GM18951 (cell line): ENCODE measurements at regions of chr11 and their contacts with region 1.

Region 1: GRCh38 chr11:2420502-2421225 is 20.1 kb downstream of the TSSC4 start:
- POLR2A ChIP-seq: no peak

Region 2: DNA sequence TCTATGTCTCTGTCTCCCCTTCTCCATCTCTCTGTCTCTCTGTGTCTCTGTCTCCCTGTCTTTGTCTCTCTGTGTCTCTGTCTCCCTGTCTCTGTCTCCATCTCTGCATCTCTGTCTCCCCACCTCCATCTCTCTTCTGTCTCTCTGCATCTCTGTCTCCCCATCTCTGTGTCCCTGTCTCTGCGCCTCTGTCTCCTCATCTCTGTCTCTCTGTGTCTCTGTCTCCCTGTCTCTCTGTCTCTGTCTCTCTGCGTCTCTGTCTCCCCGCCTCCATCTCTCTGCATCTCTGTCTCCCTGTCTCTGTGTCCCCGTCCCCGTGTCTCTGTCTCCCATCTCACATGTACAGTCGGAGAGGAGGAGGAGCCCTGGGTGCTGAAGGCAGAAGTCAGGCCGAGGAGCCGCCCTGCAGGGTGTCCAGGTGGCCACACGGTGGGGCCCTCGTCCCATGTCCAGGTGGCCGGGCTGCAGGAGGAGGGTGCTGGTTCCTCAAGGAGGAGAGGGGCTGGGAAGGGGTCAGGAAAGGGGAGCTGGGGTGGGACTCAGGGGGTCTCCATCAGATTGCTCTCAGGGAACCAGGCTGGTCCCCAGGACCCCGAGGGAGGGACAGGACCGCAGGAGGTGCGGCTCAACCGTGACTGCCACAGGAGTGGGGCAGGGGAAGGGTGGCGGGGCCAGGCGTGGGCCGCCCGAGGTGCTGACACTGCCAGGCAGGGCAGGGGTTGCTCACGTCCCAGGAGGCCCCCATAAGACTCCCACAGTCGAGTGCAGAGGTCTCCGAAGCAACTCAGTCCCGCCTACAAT is 223.5 kb before region 1 on chr11:
- in situ Hi-C with region 1: loop called (anchors 10 kb)
- POLR2A ChIP-seq: no peak